Activated CD4-positive, alpha-beta T cell treated with anti-CD3 and anti-CD28 coated beads for 36 hours (primary cell): ENCODE measurements at regions of chr11 and their contacts with region 1.

Region 1: GRCh38 chr11:90243534-90243933 is 20.7 kb upstream of the CHORDC1 start:
- DNase-seq: no peak
- ATAC-seq: no peak
- H3K4me3 Mint-ChIP-seq: no peak overlapping the region
- H3K27ac Mint-ChIP-seq: no peak overlapping the region
- H3K4me1 Mint-ChIP-seq: peaks cover 8% of the 10 kb centered on the region
- H3K27me3 Mint-ChIP-seq: peaks cover 6% of the 10 kb centered on the region

Region 2: GRCh38 chr11:90222459-90223247 is 20.9 kb before region 1 on chr11 and contains the start of gene CHORDC1:
- CTCF ChIA-PET with region 1: no interaction called
- POLR2A ChIA-PET with region 1: no interaction called
- intact Hi-C with region 1: loop called in 1 of 2 experiments (anchors 2 kb)
- DNase-seq: peak; percentile 95
- ATAC-seq: peak; percentile 91
- H3K4me3 Mint-ChIP-seq: peak within 1 kb of the TSS; percentile 94
- H3K27ac Mint-ChIP-seq: peak within 1 kb of the TSS; percentile 97
- H3K4me1 Mint-ChIP-seq: peaks cover 44% of the 10 kb centered on the region
- H3K27me3 Mint-ChIP-seq: no peaks in the 10 kb centered on the region
- total RNA-seq, gene CHORDC1: 85.4 to 112 TPM

Region 3: DNA sequence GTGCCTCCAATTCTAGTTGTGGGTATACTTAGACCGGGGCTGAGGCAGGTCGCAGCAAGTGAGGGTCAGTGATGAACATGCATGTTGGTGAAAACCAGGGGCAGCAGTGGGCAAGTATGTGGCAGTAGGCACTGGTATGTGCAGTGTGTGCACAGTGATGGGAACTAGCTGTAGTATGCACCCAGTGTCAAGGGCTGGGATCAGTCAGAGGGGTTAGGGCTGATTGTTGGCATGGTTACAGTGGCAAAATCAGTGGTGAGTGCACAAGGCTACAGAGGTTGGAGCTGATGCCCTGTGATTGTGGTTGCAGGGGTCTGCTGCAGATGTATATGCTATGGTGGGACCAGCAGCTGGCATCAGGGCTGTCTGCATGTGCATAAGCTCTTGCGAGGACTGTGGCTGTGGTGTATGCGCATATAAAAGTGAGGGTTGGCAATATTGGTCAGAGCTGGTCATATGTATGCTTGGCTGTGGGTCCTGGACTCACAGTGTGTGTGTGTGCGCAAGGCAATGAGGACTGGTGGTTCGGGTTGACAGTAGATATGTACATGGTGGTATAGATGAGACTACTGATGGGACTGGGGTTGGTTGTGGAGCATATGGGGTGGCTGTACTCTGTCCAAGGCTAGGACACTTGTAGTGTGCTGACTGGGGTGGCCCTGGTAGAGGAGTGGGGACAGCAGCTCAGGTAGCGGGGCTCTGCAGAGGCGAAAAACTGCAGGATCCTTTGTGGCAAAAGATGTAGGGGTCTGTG is 13.0 kb after region 1 on chr11:
- CTCF ChIA-PET with region 1: no interaction called
- POLR2A ChIA-PET with region 1: no interaction called
- intact Hi-C with region 1: no loop called
- DNase-seq: no peak
- ATAC-seq: no peak
- H3K4me3 Mint-ChIP-seq: no peak overlapping the region
- H3K27ac Mint-ChIP-seq: no peak overlapping the region
- H3K4me1 Mint-ChIP-seq: peaks cover 8% of the 10 kb centered on the region
- H3K27me3 Mint-ChIP-seq: peaks cover 9% of the 10 kb centered on the region

Region 4: GRCh38 chr11:90525962-90526361 is 282.4 kb after region 1 on chr11:
- CTCF ChIA-PET with region 1: no interaction called
- POLR2A ChIA-PET with region 1: no interaction called
- intact Hi-C with region 1: no loop called
- DNase-seq: no peak
- ATAC-seq: no peak
- H3K4me3 Mint-ChIP-seq: no peak overlapping the region
- H3K27ac Mint-ChIP-seq: no peak overlapping the region
- H3K4me1 Mint-ChIP-seq: no peaks in the 10 kb centered on the region
- H3K27me3 Mint-ChIP-seq: no peaks in the 10 kb centered on the region